ENCODE measurements at regions of chr3 and their contacts with region 1.

Region 1: GRCh38 chr3:43105596-43106292 is at the start of gene POMGNT2:
- DNase-seq: peak; percentile 78 to 92 (median 88)
- ATAC-seq: peak; percentile 97
- H3K4me3 ChIP-seq: peak within 1 kb of the TSS; percentile 67
- H3K4me3 Mint-ChIP-seq: peak within 1 kb of the TSS; percentile 70 to 88 (median 85)
- H3K27ac ChIP-seq: peak within 1 kb of the TSS; percentile 76
- H3K27ac Mint-ChIP-seq: peak within 1 kb of the TSS in 8 of 9 donors; percentile 46 to 91 (median 71)
- H3K4me1 ChIP-seq: peaks cover 9 to 18% of the 10 kb centered on the region in 2 donors
- H3K4me1 Mint-ChIP-seq: peaks cover 11 to 38% (median 21%) of the 10 kb centered on the region in 7 donors
- H3K27me3 ChIP-seq: no peaks in the 10 kb centered on the region
- H3K27me3 Mint-ChIP-seq: peaks cover 0 to 9% (median 0%) of the 10 kb centered on the region in 5 donors
- total RNA-seq, gene POMGNT2: 3.5 to 7.9 (median 6.2) TPM

Region 2: GRCh38 chr3:42600111-42600988 is 505.4 kb before region 1 on chr3 and contains the start of gene NKTR:
- CTCF ChIA-PET with region 1: no interaction called
- POLR2A ChIA-PET with region 1: no interaction called
- intact Hi-C with region 1: loop called in 1 of 2 experiments (anchors 10 kb)
- DNase-seq: peak; percentile 98 to 100 (median 100)
- ATAC-seq: peak; percentile 97
- H3K4me3 ChIP-seq: peak within 1 kb of the TSS; percentile 75
- H3K4me3 Mint-ChIP-seq: peak within 1 kb of the TSS; percentile 91 to 98 (median 95)
- H3K27ac ChIP-seq: peak within 1 kb of the TSS; percentile 93
- H3K27ac Mint-ChIP-seq: peak within 1 kb of the TSS; percentile 95 to 99 (median 98)
- H3K4me1 ChIP-seq: peaks cover 11 to 25% of the 10 kb centered on the region in 2 donors
- H3K4me1 Mint-ChIP-seq: peaks cover 26 to 53% (median 43%) of the 10 kb centered on the region in 7 donors
- H3K27me3 ChIP-seq: no peaks in the 10 kb centered on the region
- H3K27me3 Mint-ChIP-seq: peaks cover 0 to 2% (median 0%) of the 10 kb centered on the region in 5 donors
- total RNA-seq, gene NKTR: 110 to 275 (median 238) TPM

Region 3: GRCh38 chr3:42880601-42881451 is 224.9 kb before region 1 on chr3:
- CTCF ChIA-PET with region 1: no interaction called
- POLR2A ChIA-PET with region 1: no interaction called
- intact Hi-C with region 1: loop called in 1 of 2 experiments (anchors 1 kb)
- DNase-seq: peak; percentile 66 to 87 (median 83)
- ATAC-seq: peak; percentile 99
- H3K4me3 ChIP-seq: peak overlapping the region; percentile 64
- H3K4me3 Mint-ChIP-seq: peak overlapping the region; percentile 76 to 89 (median 85)
- H3K27ac ChIP-seq: peak overlapping the region; percentile 57
- H3K27ac Mint-ChIP-seq: peak overlapping the region; percentile 55 to 97 (median 82)
- H3K4me1 ChIP-seq: peaks cover 4 to 13% of the 10 kb centered on the region in 2 donors
- H3K4me1 Mint-ChIP-seq: peaks cover 6 to 17% (median 15%) of the 10 kb centered on the region in 7 donors
- H3K27me3 ChIP-seq: no peaks in the 10 kb centered on the region
- H3K27me3 Mint-ChIP-seq: peaks cover 0 to 25% (median 0%) of the 10 kb centered on the region in 5 donors

Region 4: GRCh38 chr3:43024181-43024885 is 81.4 kb before region 1 on chr3:
- CTCF ChIA-PET with region 1: no interaction called
- POLR2A ChIA-PET with region 1: no interaction called
- intact Hi-C with region 1: loop called in 1 of 2 experiments (anchors 1 kb)
- DNase-seq: peak in 7 of 9 donors; percentile 58 to 86 (median 79)
- ATAC-seq: peak; percentile 93
- H3K4me3 ChIP-seq: peak overlapping the region; percentile 33
- H3K4me3 Mint-ChIP-seq: peak overlapping the region; percentile 68 to 86 (median 82)
- H3K27ac ChIP-seq: peak overlapping the region; percentile 70
- H3K27ac Mint-ChIP-seq: peak overlapping the region in 8 of 9 donors; percentile 51 to 97 (median 92)
- H3K4me1 ChIP-seq: peaks cover 55 to 68% of the 10 kb centered on the region in 2 donors
- H3K4me1 Mint-ChIP-seq: peaks cover 9 to 88% (median 57%) of the 10 kb centered on the region in 7 donors
- H3K27me3 ChIP-seq: no peaks in the 10 kb centered on the region
- H3K27me3 Mint-ChIP-seq: peaks cover 0 to 11% (median 0%) of the 10 kb centered on the region in 5 donors

Region 5: DNA sequence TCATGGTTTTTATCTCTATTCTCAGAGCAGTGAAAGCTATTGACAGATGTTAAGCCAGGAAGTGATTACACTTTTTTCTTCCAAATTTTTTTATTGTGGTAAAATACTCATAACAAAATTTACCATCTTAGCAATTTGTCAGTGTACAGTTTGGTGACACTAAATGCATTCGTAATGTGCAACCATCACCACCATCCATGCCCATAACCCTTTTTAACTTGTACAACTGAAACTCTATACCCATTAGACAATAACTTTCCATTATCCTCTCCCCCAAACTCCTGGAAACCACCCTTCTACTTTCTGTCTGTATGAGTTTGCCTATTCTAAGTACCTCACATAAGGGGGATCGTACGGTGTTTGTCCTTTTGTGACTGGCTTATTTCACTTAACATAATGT is 15.2 kb after region 1 on chr3:
- CTCF ChIA-PET with region 1: no interaction called
- POLR2A ChIA-PET with region 1: no interaction called
- intact Hi-C with region 1: no loop called
- DNase-seq: no peak
- ATAC-seq: no peak
- H3K4me3 ChIP-seq: no peak overlapping the region
- H3K4me3 Mint-ChIP-seq: no peak overlapping the region
- H3K27ac ChIP-seq: no peak overlapping the region
- H3K27ac Mint-ChIP-seq: no peak overlapping the region
- H3K4me1 ChIP-seq: no peaks in the 10 kb centered on the region
- H3K4me1 Mint-ChIP-seq: peaks cover 0 to 2% (median 0%) of the 10 kb centered on the region in 7 donors
- H3K27me3 ChIP-seq: no peaks in the 10 kb centered on the region
- H3K27me3 Mint-ChIP-seq: peaks cover 0 to 15% (median 12%) of the 10 kb centered on the region in 5 donors

Region 6: DNA sequence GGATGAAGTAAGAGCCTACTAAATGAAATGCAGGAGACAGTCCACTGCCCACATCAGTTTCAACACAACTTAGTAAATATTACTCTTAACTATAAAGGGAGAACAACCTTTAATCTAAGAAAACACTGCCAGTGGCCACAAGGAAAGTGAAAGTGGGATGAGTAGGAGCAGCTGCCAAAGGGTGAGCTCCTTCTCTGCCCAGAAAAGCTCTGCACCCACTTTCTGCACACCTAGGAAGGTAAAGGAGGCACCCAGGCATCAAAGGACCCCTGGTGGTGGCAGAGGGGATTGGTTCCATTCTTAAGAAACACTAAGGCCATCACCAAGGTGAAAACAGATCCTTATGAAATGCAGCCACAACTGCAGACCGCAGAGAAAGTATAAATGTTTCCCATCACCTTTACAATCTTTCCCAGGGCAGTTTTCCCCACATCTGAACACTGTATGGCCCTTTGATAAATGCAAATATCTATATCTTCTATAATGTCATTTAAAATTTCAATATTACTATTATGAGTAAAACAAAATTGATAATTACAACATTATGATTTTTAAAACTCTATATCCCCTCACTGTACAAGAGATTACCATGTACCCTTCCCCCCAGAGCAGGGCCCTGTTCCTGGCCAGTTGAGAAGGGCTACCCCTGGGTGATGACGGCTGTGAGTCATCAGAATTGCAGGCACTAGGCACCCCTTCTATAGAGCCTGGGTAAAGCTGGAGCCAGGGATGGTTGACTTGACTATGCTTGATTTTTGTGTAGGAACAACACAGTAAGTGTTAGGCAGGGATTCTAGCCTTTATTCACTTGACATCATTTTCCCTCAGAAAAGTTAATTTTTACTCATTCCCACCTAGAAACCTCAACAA is 272.6 kb after region 1 on chr3:
- CTCF ChIA-PET with region 1: interaction called, 3 read pairs
- POLR2A ChIA-PET with region 1: no interaction called
- intact Hi-C with region 1: loop called in 1 of 2 experiments (anchors 5 kb)
- DNase-seq: peak; percentile 30 to 78 (median 71)
- ATAC-seq: peak; percentile 94
- H3K4me3 ChIP-seq: no peak overlapping the region
- H3K4me3 Mint-ChIP-seq: no peak overlapping the region
- H3K27ac ChIP-seq: no peak overlapping the region
- H3K27ac Mint-ChIP-seq: peak overlapping the region in 8 of 9 donors; percentile 26 to 88 (median 40)
- H3K4me1 ChIP-seq: peaks cover 6 to 10% of the 10 kb centered on the region in 2 donors
- H3K4me1 Mint-ChIP-seq: peaks cover 6 to 29% (median 19%) of the 10 kb centered on the region in 7 donors
- H3K27me3 ChIP-seq: no peaks in the 10 kb centered on the region
- H3K27me3 Mint-ChIP-seq: peaks cover 0 to 12% (median 0%) of the 10 kb centered on the region in 5 donors

Region 7: DNA sequence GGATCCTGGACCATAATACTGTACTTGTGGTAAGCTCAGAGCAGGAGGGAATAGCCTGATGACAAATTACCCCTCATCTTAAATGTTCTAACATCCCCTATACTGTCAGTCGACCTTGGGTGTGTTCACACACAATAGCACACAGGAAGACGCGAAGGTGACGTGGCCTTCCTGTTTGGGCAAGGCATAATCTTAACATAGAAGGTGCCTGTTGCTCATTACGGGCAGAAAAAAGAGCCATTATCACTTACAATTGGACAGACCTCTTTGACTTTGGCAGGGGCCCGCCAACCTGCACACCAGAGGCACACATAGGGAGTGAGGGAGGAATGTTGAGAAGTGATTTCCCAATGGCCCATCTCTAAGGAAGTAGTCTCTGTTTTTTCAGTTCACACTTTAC is 371.9 kb after region 1 on chr3:
- CTCF ChIA-PET with region 1: no interaction called
- POLR2A ChIA-PET with region 1: no interaction called
- intact Hi-C with region 1: loop called in 1 of 2 experiments (anchors 1 kb)
- DNase-seq: peak in 8 of 9 donors; percentile 21 to 81 (median 72)
- ATAC-seq: peak; percentile 98
- H3K4me3 ChIP-seq: peak overlapping the region; percentile 7
- H3K4me3 Mint-ChIP-seq: peak overlapping the region; percentile 48 to 78 (median 65)
- H3K27ac ChIP-seq: peak overlapping the region; percentile 71
- H3K27ac Mint-ChIP-seq: peak overlapping the region; percentile 91 to 99 (median 98)
- H3K4me1 ChIP-seq: peaks cover 33 to 40% of the 10 kb centered on the region in 2 donors
- H3K4me1 Mint-ChIP-seq: peaks cover 24 to 66% (median 60%) of the 10 kb centered on the region in 7 donors
- H3K27me3 ChIP-seq: no peaks in the 10 kb centered on the region
- H3K27me3 Mint-ChIP-seq: peaks cover 0 to 2% (median 0%) of the 10 kb centered on the region in 5 donors

Region 8: DNA sequence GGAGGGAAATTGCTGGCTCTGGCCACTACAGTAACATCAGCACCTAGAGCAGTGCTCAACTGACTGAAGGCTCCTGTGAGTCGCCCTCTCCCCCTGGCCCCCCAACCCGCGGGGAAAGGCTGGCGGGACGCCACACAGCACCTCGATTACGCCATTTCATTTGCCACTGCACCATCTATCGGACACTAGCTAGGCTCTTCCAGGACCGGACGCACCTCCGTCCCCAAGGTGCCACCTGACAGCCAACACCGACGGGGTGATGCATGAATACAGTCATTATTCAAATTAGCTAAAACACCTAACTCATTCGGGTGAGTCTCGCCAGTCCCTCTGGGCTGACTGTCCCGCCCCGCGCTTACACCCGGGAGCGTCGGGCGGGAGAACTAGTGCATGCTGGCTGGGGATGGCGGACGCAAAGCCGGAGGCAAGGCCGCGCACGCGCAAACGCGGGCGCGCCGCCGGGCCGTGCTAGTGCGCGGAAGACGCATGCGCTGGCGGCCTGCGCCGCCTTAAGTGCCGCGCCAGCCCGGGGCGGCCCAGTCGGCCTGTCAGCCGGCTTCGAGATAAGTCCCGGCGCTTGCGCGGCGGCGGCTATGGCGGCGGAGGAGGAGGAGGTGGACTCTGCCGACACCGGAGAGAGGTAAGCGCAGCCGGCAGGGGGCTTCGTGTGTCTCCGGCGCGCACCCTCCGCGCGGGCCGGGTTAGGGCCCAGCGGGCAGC is 584.8 kb after region 1 on chr3 and contains the start of gene ABHD5:
- CTCF ChIA-PET with region 1: no interaction called
- POLR2A ChIA-PET with region 1: no interaction called
- intact Hi-C with region 1: loop called (anchors 2 to 5 kb)
- DNase-seq: peak; percentile 94 to 99 (median 96)
- ATAC-seq: peak; percentile 96
- H3K4me3 ChIP-seq: peak within 1 kb of the TSS; percentile 74
- H3K4me3 Mint-ChIP-seq: peak within 1 kb of the TSS; percentile 91 to 98 (median 94)
- H3K27ac ChIP-seq: peak within 1 kb of the TSS; percentile 85
- H3K27ac Mint-ChIP-seq: peak within 1 kb of the TSS; percentile 90 to 97 (median 92)
- H3K4me1 ChIP-seq: peaks cover 8% of the 10 kb centered on the region in 2 donors
- H3K4me1 Mint-ChIP-seq: peaks cover 11 to 47% (median 37%) of the 10 kb centered on the region in 7 donors
- H3K27me3 ChIP-seq: no peaks in the 10 kb centered on the region
- H3K27me3 Mint-ChIP-seq: peaks cover 0 to 6% (median 0%) of the 10 kb centered on the region in 5 donors
- total RNA-seq, gene ABHD5: 6.1 to 21.0 (median 12.1) TPM